ENCODE measurements at regions of chr3 and their contacts with region 1.

Region 1: DNA sequence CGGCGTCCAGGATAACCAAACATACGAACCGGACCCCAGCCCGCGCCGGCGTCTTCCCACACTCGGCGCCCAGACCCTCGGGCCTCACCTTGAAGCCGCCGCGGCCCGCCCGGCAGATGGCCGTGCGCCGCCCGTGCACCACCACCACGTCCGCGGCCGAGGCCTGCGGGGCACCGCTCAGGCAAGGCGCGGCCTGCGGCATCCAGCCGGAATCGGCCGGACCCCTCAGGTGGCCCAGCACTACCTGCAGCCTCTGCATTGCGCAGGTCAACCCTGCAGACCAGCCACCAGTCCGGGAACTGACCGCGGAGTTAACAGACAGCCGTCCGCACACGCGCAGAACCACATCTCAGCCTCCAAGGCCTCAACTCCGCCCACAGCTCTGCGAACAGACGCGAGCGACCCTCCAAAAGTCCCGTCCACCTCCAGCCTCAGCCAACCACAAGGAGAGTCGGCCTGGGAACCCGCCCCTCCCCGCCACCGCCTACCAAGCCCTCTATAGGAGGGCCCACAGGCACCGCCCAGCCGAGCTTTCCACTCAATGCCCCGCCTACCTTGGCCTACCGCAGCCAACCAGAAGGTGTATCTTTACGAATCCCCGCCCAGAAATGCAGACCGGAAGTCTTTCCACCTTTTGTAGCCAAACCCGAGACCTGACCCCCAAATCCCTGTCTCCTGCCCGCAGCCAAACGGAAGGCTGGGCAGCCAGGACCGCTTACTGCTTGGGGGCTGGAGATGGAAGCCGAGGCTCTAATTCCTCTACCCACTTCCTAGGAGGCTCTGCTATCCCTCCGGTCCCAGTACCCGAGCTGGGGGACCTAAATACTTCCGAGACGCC is at the start of gene ACAA1:
- DNase-seq: peak; percentile 99
- ATAC-seq: peak; percentile 95
- H3K4me3 Mint-ChIP-seq: peak within 1 kb of the TSS; percentile 97
- H3K27ac Mint-ChIP-seq: peak within 1 kb of the TSS; percentile 100
- H3K4me1 Mint-ChIP-seq: peaks cover 53% of the 10 kb centered on the region
- H3K27me3 Mint-ChIP-seq: no peaks in the 10 kb centered on the region
- total RNA-seq, gene ACAA1: 52.2 to 64.6 TPM

Region 2: DNA sequence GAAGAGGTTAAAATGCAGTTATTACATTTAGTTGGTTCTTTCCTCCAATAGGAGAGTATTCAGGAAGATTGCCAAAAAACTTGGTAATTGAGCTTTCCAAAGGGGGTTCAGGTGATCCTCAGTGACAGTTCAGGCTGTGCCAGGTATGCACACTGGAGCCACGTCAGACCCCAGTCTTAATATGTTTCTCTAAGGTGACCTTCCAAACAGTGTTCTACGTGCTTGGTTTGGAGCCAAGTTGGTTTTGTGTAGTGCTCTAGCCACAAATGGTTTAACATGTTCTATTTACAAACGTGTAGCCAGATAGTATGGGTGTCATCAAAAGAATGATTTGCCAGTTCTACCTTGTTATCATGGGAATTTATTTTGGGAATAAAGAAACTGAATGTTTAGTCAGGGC is 254.3 kb before region 1 on chr3:
- CTCF ChIA-PET with region 1: no interaction called
- POLR2A ChIA-PET with region 1: no interaction called
- intact Hi-C with region 1: no loop called
- DNase-seq: no peak
- ATAC-seq: no peak
- H3K4me3 Mint-ChIP-seq: no peak overlapping the region
- H3K27ac Mint-ChIP-seq: no peak overlapping the region
- H3K4me1 Mint-ChIP-seq: no peaks in the 10 kb centered on the region
- H3K27me3 Mint-ChIP-seq: no peaks in the 10 kb centered on the region

Region 3: GRCh38 chr3:38039101-38039898 is 97.7 kb before region 1 on chr3 and contains the start of gene DLEC1:
- CTCF ChIA-PET with region 1: no interaction called
- POLR2A ChIA-PET with region 1: no interaction called
- intact Hi-C with region 1: loop called (anchors 1 kb)
- DNase-seq: peak; percentile 91
- ATAC-seq: peak; percentile 70
- H3K4me3 Mint-ChIP-seq: peak within 1 kb of the TSS; percentile 29
- H3K27ac Mint-ChIP-seq: peak within 1 kb of the TSS; percentile 91
- H3K4me1 Mint-ChIP-seq: peaks cover 27% of the 10 kb centered on the region
- H3K27me3 Mint-ChIP-seq: peaks cover 2% of the 10 kb centered on the region
- total RNA-seq, gene DLEC1: 0.19 to 0.46 TPM

Region 4: DNA sequence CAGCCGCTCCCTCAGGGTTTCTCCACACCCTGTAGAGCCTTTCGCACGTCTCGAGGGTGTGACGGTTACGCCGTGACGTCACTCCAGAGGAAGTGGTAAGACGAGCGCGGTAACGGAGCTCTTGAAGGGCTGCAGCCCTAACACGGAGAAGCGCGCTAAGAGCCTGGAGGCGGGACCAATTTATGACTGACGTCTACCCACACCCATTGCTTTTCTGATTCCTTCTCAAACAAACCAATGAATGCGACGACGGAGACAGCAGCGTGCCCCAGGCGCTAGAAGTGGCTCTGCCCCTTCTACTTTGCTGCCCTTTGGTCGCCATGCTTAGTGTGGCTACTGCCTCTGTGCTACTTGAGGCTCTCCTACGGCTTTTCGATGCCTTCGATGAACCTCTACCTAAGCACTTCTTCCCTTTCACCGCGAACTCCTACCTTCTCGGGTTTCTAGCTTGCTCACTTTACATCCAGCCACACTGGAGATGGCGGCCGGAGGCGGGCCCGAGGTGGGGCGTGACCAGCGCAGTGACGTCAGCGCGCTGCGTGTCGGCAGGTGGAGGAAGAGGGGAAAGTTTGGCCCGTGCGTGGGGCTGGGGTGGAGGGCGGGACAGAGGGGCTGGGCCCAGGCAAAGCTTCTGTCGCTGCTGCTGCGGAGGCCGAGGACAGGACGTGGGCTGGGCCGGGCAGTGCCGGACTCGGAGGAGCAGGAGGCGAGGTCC is 28.1 kb after region 1 on chr3 and contains the start of gene OXSR1:
- CTCF ChIA-PET with region 1: interaction called, 16 read pairs
- POLR2A ChIA-PET with region 1: interaction called, 47 read pairs
- intact Hi-C with region 1: loop called (anchors 1 kb)
- DNase-seq: peak; percentile 98
- ATAC-seq: peak; percentile 94
- H3K4me3 Mint-ChIP-seq: peak within 1 kb of the TSS; percentile 92
- H3K27ac Mint-ChIP-seq: peak within 1 kb of the TSS; percentile 99
- H3K4me1 Mint-ChIP-seq: peaks cover 40% of the 10 kb centered on the region
- H3K27me3 Mint-ChIP-seq: no peaks in the 10 kb centered on the region
- total RNA-seq, gene OXSR1: 53.7 to 56.0 TPM

Region 5: DNA sequence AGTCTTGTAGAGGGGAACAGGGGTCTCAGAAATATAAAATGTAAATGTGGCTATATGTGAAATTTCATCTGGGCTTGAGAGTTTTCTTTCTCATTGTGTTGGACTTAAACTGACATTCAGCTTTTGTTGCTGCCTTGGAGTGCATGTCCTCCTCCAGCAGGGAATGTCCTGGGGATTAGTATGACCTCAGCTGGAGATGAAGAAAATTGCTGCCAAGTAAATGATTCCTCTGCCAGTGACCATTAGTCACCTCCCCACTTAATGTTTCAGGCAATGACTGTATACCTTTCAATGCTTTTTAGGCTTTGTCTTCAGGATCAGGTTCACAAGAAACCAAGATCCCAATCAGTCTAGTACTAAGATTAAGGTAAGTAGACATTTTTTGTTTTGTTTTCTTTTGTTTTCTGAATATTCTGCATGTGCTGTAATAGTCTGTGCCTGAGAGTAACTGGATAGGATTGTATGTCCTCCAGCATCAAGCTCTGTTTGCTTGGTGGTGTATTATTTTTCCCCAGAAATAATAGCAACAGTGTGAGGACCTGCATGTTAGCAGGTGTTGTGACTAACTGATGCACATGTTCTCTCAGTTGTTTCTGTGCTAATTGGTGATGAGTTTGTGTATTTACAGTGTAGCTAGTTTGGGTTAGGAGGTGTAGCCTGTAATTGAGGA is 110.5 kb after region 1 on chr3:
- CTCF ChIA-PET with region 1: no interaction called
- POLR2A ChIA-PET with region 1: no interaction called
- intact Hi-C with region 1: no loop called
- DNase-seq: no peak
- ATAC-seq: no peak
- H3K4me3 Mint-ChIP-seq: no peak overlapping the region
- H3K27ac Mint-ChIP-seq: no peak overlapping the region
- H3K4me1 Mint-ChIP-seq: no peaks in the 10 kb centered on the region
- H3K27me3 Mint-ChIP-seq: no peaks in the 10 kb centered on the region

Region 6: GRCh38 chr3:38317155-38317759 is 180.3 kb after region 1 on chr3:
- CTCF ChIA-PET with region 1: no interaction called
- POLR2A ChIA-PET with region 1: no interaction called
- intact Hi-C with region 1: no loop called
- DNase-seq: no peak
- ATAC-seq: no peak
- H3K4me3 Mint-ChIP-seq: no peak overlapping the region
- H3K27ac Mint-ChIP-seq: no peak overlapping the region
- H3K4me1 Mint-ChIP-seq: no peaks in the 10 kb centered on the region
- H3K27me3 Mint-ChIP-seq: peaks cover under 1% of the 10 kb centered on the region

Region 7: GRCh38 chr3:38346587-38347410 is 209.8 kb after region 1 on chr3 and contains the start of gene XYLB:
- CTCF ChIA-PET with region 1: interaction called, 10 read pairs
- POLR2A ChIA-PET with region 1: interaction called, 3 read pairs
- intact Hi-C with region 1: loop called (anchors 2 kb)
- DNase-seq: peak; percentile 89
- ATAC-seq: peak; percentile 98
- H3K4me3 Mint-ChIP-seq: peak within 1 kb of the TSS; percentile 70
- H3K27ac Mint-ChIP-seq: no peak within 1 kb of the TSS
- H3K4me1 Mint-ChIP-seq: peaks cover 2% of the 10 kb centered on the region
- H3K27me3 Mint-ChIP-seq: peaks cover 2% of the 10 kb centered on the region
- total RNA-seq, gene XYLB: 5.0 to 5.3 TPM

Region 8: GRCh38 chr3:38479431-38480092 is 342.6 kb after region 1 on chr3:
- CTCF ChIA-PET with region 1: no interaction called
- POLR2A ChIA-PET with region 1: no interaction called
- intact Hi-C with region 1: loop called (anchors 5 kb)
- DNase-seq: peak; percentile 64
- ATAC-seq: peak; percentile 78
- H3K4me3 Mint-ChIP-seq: no peak overlapping the region
- H3K27ac Mint-ChIP-seq: no peak overlapping the region
- H3K4me1 Mint-ChIP-seq: peaks cover under 1% of the 10 kb centered on the region
- H3K27me3 Mint-ChIP-seq: no peaks in the 10 kb centered on the region

Region 9: DNA sequence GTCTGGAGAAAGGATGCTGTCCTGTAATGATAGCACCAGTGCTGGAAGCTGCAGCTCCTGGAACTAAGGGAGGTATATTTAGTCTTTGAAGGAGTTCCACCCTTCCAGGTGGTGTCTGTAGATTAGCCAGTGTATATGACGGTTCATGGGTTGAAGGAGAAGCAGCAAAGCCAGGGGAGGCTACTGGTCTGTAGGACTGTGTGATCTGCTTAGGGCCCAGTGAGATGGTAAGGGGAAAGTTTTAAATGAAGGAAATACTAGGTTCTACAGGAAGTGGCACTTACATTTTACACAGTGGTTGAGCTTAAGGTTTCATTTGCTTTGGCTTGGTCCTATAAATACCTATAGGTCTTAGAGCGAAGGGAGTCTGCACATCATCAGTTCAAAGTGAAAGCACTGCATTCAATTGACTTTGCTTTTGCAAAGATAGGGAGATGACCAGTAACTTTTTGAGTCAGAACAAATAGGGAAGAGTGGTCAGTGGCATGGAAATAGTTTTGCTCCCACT is 1251.8 kb after region 1 on chr3:
- CTCF ChIA-PET with region 1: no interaction called
- POLR2A ChIA-PET with region 1: no interaction called
- intact Hi-C with region 1: loop called in 1 of 2 experiments (anchors 5 kb)
- DNase-seq: no peak
- ATAC-seq: no peak
- H3K4me3 Mint-ChIP-seq: no peak overlapping the region
- H3K27ac Mint-ChIP-seq: peak overlapping the region; percentile 73
- H3K4me1 Mint-ChIP-seq: peaks cover 49% of the 10 kb centered on the region
- H3K27me3 Mint-ChIP-seq: no peaks in the 10 kb centered on the region

Measured in activated CD4-positive, alpha-beta T cell treated with anti-CD3 and anti-CD28 coated beads for 36 hours (primary cell).